Activated CD4-positive, alpha-beta T cell treated with anti-CD3 and anti-CD28 coated beads for 36 hours (primary cell): ENCODE measurements at regions of chr9 and their contacts with region 1.

Region 1: DNA sequence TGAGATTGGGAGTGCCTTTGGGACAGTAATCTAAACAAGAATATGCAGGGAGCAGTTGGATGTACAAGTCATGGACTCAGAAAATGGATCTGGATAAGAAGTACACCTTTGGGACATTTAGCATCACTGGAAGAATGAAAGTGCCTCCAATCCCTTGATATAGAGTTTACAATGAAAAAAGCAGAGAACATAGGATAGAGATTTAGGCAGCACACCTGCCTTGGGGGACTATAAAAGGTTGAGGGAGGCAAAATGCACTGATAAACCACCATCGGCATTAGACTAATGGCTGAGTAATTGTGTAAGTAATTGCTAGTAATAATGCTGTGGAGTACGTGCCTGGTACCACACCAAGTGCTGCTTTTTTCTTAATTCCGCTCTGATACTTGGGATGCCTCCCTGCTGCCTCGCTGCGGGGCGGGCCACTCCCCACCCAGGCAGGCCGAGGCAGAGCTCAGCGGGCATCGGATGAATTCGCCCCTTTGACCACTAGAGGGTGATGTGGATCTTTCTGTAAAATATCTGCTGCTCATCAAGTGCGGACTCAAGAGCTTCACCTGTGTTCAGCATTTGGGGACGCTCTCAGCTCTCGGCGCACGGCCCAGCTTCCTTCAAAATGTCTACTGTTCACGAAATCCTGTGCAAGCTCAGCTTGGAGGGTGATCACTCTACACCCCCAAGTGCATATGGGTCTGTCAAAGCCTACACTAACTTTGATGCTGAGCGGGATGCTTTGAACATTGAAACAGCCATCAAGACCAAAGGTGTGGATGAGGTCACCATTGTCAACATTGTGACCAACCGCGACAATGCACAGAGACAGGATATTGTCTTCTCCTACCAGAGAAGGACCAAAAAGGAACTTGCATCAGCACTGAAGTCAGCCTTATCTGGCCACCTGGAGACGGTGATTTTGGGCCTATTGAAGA is 99.9 kb downstream of the ANKRD18B start:
- DNase-seq: peak; percentile 79
- ATAC-seq: peak; percentile 94
- H3K4me3 Mint-ChIP-seq: no peak overlapping the region
- H3K27ac Mint-ChIP-seq: no peak overlapping the region
- H3K4me1 Mint-ChIP-seq: peaks cover 6% of the 10 kb centered on the region
- H3K27me3 Mint-ChIP-seq: peaks cover 21% of the 10 kb centered on the region

Region 2: GRCh38 chr9:33649463-33649862 is 25.5 kb after region 1 on chr9:
- CTCF ChIA-PET with region 1: interaction called, 20 read pairs
- POLR2A ChIA-PET with region 1: no interaction called
- intact Hi-C with region 1: no loop called
- DNase-seq: no peak
- ATAC-seq: no peak
- H3K4me3 Mint-ChIP-seq: no peak overlapping the region
- H3K27ac Mint-ChIP-seq: no peak overlapping the region
- H3K4me1 Mint-ChIP-seq: peaks cover 2% of the 10 kb centered on the region
- H3K27me3 Mint-ChIP-seq: peaks cover 29% of the 10 kb centered on the region

Region 3: GRCh38 chr9:33682551-33682950 is 58.6 kb after region 1 on chr9:
- CTCF ChIA-PET with region 1: interaction called, 13 read pairs
- POLR2A ChIA-PET with region 1: no interaction called
- intact Hi-C with region 1: loop called in 1 of 2 experiments (anchors 1 kb)
- DNase-seq: no peak
- ATAC-seq: no peak
- H3K4me3 Mint-ChIP-seq: no peak overlapping the region
- H3K27ac Mint-ChIP-seq: no peak overlapping the region
- H3K4me1 Mint-ChIP-seq: no peaks in the 10 kb centered on the region
- H3K27me3 Mint-ChIP-seq: peaks cover 48% of the 10 kb centered on the region

Region 4: DNA sequence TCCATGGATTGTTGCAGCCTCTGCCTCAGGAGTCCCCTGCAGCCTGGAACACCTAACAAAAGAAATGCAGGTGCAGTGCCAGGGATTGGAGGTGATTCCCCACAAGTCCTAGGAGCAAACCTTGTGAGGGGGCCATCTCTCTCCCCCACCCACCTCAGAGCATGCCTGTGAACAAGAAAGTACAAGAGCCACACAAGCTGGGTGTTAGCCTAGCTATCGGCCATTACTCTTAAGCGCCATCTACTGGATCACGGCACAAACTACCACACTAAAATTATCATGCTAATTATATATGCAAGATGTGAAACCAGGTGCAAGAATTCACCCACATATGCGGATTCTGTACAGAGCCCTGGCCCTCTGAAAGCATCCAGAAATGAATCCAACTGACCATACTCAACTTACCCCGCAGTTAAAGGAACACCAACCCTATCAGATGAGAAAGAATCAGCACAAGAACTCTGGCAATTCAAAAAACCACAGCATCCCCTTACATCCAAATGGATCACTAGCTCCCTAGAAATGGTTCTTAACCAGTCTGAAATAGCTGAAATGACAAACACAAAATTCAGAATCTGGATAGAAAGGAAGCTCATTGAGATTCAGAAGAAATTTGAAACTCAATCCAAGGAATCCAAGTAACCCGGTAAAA is 154.9 kb after region 1 on chr9:
- CTCF ChIA-PET with region 1: interaction called, 15 read pairs
- POLR2A ChIA-PET with region 1: no interaction called
- intact Hi-C with region 1: loop called (anchors 1 kb)
- DNase-seq: peak; percentile 64
- ATAC-seq: peak; percentile 96
- H3K4me3 Mint-ChIP-seq: no peak overlapping the region
- H3K27ac Mint-ChIP-seq: no peak overlapping the region
- H3K4me1 Mint-ChIP-seq: peaks cover 5% of the 10 kb centered on the region
- H3K27me3 Mint-ChIP-seq: peaks cover 3% of the 10 kb centered on the region